ENCODE measurements at regions of chr16 and their contacts with region 1.

Region 1: DNA sequence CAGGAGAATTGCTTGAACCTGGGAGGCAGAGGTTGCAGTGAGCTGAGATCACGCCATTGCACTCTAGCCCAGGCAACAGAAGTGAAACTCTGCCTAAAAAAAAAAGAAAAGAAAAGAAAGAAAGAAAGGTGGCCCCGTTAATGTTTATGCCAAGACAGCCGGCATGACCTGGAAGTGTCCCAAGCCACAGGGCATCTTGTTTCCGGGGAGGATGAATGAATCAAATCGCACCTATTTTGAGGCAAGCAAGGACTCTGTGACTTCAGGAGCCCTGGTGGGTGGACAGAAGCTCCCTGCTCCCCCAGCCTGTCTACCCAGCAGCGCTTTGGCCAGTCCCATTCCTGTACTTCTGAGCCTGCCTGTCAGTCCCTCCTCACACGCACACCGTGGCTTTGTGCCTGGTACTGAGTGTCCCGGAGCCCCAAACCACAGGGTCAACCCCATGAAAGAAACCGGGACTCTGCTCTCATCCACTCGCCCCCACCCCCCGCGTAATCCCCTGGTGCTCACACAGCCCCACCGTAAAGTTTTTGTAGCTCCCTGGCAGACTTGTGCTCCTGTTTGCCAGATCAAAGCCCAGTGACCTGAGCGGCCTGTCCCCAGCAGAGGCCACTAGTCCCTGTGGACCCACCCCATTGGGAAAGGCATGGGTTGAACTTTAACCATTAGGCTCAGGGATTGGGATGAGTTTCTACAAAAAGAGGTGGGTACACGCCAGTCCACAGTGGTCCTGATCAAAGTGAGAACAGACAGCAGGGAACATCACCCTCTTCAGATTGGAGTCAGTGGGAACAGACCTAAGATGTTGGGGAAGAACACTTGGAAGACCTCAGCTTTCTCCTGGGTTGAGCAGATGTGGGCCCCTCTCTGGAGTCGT is 19.3 kb downstream of the CD2BP2 start:
- DNase-seq: no peak
- ATAC-seq: peak; percentile 31
- H3K4me3 ChIP-seq: peak overlapping the region; percentile 57 to 59
- H3K27ac ChIP-seq: peak overlapping the region; percentile 69
- H3K4me1 ChIP-seq: 0 out of 2 replicates have a peak, but pooled peaks cover 4% of the 10 kb centered on the region
- H3K27me3 ChIP-seq: no peaks in the 10 kb centered on the region
- CTCF ChIP-seq: no peak

Region 2: GRCh38 chr16:30356401-30357369 is 20.8 kb after region 1 on chr16:
- CTCF ChIA-PET with region 1: no interaction called
- POLR2A ChIA-PET with region 1: interaction called, 11 read pairs
- in situ Hi-C with region 1: no loop called
- intact Hi-C with region 1: no loop called
- DNase-seq: no peak
- ATAC-seq: no peak
- H3K4me3 ChIP-seq: peak overlapping the region; percentile 98 to 99; a peak in 3 of 4 replicates
- H3K27ac ChIP-seq: peak overlapping the region; percentile 99
- H3K4me1 ChIP-seq: peaks cover 46% of the 10 kb centered on the region
- H3K27me3 ChIP-seq: no peaks in the 10 kb centered on the region
- CTCF ChIP-seq: no peak

Region 3: GRCh38 chr16:30370444-30371247 is 34.8 kb after region 1 on chr16 and contains the start of gene TBC1D10B:
- CTCF ChIA-PET with region 1: no interaction called
- POLR2A ChIA-PET with region 1: interaction called, 10 read pairs
- in situ Hi-C with region 1: no loop called
- intact Hi-C with region 1: no loop called
- DNase-seq: peak; percentile 100
- ATAC-seq: peak; percentile 93
- H3K4me3 ChIP-seq: peak within 1 kb of the TSS; percentile 80 to 85
- H3K27ac ChIP-seq: peak within 1 kb of the TSS; percentile 84
- H3K4me1 ChIP-seq: 0 out of 2 replicates have a peak, but pooled peaks cover 7% of the 10 kb centered on the region
- H3K27me3 ChIP-seq: no peaks in the 10 kb centered on the region
- CTCF ChIP-seq: no peak
- total RNA-seq, gene TBC1D10B: 52.6 TPM

Region 4: DNA sequence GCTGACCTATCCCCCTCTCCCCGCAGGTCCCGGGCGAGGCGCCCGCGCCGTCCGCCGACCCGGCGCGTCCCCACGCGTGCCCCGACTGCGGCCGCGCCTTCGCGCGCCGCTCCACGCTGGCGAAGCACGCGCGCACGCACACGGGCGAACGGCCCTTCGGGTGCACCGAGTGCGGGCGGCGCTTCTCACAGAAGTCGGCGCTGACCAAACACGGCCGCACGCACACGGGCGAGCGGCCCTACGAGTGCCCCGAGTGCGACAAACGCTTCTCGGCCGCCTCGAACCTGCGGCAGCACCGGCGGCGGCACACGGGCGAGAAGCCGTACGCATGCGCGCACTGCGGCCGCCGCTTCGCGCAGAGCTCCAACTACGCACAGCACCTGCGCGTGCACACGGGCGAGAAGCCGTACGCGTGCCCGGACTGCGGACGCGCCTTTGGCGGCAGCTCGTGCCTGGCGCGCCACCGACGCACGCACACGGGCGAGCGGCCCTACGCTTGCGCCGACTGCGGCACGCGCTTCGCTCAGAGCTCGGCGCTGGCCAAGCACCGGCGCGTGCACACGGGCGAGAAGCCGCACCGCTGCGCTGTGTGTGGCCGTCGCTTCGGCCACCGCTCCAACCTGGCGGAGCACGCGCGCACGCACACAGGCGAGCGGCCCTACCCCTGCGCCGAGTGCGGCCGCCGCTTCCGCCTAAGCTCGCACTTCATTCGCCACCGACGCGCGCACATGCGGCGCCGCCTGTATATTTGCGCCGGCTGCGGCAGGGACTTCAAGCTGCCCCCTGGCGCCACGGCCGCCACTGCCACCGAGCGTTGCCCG is 81.9 kb after region 1 on chr16:
- CTCF ChIA-PET with region 1: no interaction called
- POLR2A ChIA-PET with region 1: no interaction called
- in situ Hi-C with region 1: no loop called
- intact Hi-C with region 1: no loop called
- DNase-seq: peak; percentile 81
- ATAC-seq: peak; percentile 94
- H3K4me3 ChIP-seq: peak overlapping the region; percentile 45 to 55
- H3K27ac ChIP-seq: peak overlapping the region; percentile 77
- H3K4me1 ChIP-seq: peaks cover 13% of the 10 kb centered on the region
- H3K27me3 ChIP-seq: no peaks in the 10 kb centered on the region
- CTCF ChIP-seq: no peak

Measured in Panc1 (cell line).